Mammary epithelial cell (primary cell): ENCODE measurements at regions of chr6 and their contacts with region 1.

Region 1: DNA sequence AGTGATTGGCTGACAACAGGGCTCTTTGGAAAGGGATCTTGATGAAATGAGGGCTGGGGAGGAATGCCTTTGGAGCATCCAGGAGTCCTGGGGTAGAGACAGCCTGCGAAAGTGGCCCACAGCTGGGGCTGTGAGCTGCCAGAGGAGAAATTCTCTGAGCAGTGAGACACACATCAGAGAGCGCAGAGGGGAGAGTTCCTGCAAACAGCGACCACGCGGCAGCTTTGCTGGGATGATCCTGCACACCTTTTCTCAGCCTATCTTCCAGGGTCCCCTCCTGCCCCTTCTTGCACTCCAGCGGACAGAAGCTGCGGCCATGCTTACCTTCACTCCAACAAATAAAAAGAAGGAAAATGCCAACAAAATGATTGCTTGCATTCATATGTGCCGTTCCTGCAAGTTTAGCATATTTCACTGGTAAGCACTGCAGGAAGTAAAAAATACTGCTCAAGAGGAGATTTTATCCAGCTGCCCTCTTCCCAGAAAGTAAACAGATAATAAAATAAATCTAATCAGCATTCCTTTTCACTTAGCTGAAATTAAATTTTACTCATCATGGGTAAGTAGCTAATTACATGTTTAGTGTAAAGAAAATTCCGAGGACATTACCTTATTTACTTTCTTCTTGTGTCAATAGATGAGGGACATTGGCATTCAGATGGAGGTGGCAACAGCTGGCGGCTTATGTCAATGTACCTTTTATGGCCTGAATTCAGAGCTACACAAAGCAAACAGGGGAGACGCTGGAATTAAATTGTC is 339.9 kb upstream of the ARID1B start:
- DNase-seq: no peak
- H3K4me3 ChIP-seq: no peak overlapping the region
- H3K27ac ChIP-seq: no peak overlapping the region
- H3K4me1 ChIP-seq: no peaks in the 10 kb centered on the region
- H3K27me3 ChIP-seq: no peaks in the 10 kb centered on the region
- CTCF ChIP-seq: no peak

Region 2: DNA sequence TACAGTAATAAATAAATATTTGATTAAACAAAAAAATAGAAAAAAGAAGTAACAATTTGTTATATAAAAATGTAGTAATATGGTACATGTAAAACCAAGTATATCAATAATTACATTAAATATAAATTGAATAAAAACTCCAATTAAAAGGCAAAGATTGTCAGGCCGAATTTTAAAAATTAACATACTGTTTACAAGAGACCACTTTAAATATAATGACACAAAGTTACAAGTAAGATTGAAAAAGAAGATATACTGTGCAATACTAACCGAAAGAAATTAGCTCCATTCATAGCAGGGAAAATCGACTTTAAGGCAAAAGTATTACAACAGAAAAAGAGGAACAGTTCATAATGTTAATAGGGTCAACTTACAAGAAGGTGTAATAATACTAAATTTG is 231.6 kb before region 1 on chr6:
- CTCF ChIA-PET with region 1: no interaction called
- dilution Hi-C with region 1: loop called (anchors 10 kb)
- in situ Hi-C with region 1: no loop called
- intact Hi-C with region 1: no loop called
- DNase-seq: no peak
- H3K4me3 ChIP-seq: no peak overlapping the region
- H3K27ac ChIP-seq: no peak overlapping the region
- H3K4me1 ChIP-seq: no peaks in the 10 kb centered on the region
- H3K27me3 ChIP-seq: no peaks in the 10 kb centered on the region
- CTCF ChIP-seq: no peak

Region 3: DNA sequence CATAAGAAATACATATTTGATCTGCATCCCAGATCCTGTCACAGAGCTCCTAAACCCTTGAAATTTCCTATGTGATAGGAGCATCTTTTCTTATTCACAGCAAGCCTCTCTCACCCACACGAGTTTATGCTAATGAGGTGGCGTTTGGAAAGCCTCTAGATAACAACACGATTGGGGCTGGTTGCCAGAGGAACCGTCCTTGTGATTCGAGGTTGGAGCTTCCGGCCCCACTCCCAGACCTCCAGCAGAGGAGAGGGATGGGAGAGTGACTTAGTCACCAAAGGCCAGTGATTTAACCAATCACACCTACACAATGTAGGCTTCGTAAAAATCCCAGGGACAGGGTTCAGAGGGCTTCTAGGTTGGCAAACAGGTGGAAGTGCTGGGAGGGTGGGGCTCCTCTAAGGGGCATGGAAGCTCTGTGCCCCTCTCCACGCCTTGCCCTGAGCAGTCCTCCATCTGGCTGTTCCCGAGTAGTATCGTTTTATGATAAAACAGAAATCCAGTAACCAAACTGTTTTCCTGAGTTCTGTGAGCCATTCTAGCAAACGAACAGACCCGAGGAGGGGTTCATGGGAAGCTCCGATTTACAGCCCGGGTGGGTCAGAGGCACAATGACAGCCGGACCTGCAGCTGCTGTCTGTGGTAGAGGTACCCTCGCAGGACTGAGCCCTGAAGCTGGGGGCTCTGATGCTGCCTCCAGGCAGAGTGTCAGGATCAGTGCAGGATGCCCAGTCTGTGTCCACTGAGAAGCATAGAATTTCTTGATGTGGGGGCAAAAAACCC is 101.8 kb after region 1 on chr6:
- CTCF ChIA-PET with region 1: no interaction called
- dilution Hi-C with region 1: loop called (anchors 5 kb)
- in situ Hi-C with region 1: no loop called
- intact Hi-C with region 1: no loop called
- DNase-seq: no peak
- H3K4me3 ChIP-seq: no peak overlapping the region
- H3K27ac ChIP-seq: no peak overlapping the region
- H3K4me1 ChIP-seq: no peaks in the 10 kb centered on the region
- H3K27me3 ChIP-seq: no peaks in the 10 kb centered on the region
- CTCF ChIP-seq: no peak